SK-N-SH (cell line): ENCODE measurements at regions of chr16 and their contacts with region 1.

Region 1: GRCh38 chr16:117379-118365 is 20.8 kb downstream of the NPRL3 start:
- DNase-seq: peak; percentile 87
- H3K4me3 ChIP-seq: no peak overlapping the region
- H3K27ac ChIP-seq: no peak overlapping the region
- H3K4me1 ChIP-seq: peaks cover 6 to 14% of the 10 kb centered on the region in 2 experiments; a peak in 3 of 4 replicates
- H3K27me3 ChIP-seq: no peaks in the 10 kb centered on the region
- CTCF ChIP-seq: peak; percentile 74
- EP300 ChIP-seq: no peak
- RAD21 ChIP-seq: peak; percentile 62

Region 2: GRCh38 chr16:53346-54236 is 64.1 kb before region 1 on chr16 and contains the starts of genes POLR3K and SNRNP25:
- CTCF ChIA-PET with region 1: no interaction called
- POLR2A ChIA-PET with region 1: no interaction called
- DNase-seq: peak; percentile 100
- H3K4me3 ChIP-seq: peak within 1 kb of the TSS; percentile 67 to 87
- H3K27ac ChIP-seq: peak within 1 kb of the TSS; percentile 70 to 72
- H3K4me1 ChIP-seq: peaks cover 3 to 9% of the 10 kb centered on the region in 2 experiments; a peak in 1 of 4 replicates
- H3K27me3 ChIP-seq: no peaks in the 10 kb centered on the region
- CTCF ChIP-seq: no peak
- EP300 ChIP-seq: no peak
- RAD21 ChIP-seq: no peak
- polyA plus RNA-seq, gene POLR3K: 43.0 and 54.5 TPM in 2 replicates
- polyA plus RNA-seq, gene SNRNP25: 61.9 and 73.4 TPM in 2 replicates

Region 3: DNA sequence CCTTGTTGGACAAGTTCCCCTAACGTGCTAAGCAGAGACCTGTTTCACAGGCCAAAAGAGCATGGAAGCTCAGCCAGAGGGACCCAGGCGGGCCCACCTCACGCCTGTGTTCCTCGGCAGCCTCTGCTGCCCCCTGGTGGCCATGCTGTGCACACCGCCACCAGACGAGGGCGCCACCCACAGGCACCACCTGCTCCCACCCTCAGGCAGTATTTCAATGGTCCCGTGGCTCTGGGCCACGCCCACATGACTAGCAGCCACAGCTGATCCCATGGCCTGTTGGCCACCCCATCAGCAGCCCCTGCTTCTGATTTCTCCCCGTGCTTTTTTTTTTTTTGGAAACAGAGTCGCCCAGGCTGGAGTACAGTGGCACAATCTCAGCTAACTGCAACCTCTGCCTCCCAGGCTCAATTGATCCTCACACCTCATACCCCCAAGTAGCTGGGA is 20.7 kb before region 1 on chr16:
- CTCF ChIA-PET with region 1: interaction called, 28 read pairs
- POLR2A ChIA-PET with region 1: no interaction called
- DNase-seq: peak; percentile 95
- H3K4me3 ChIP-seq: no peak overlapping the region; a peak in 1 of 4 replicates
- H3K27ac ChIP-seq: no peak overlapping the region
- H3K4me1 ChIP-seq: peaks cover 0 to 8% of the 10 kb centered on the region in 2 experiments; a peak in 1 of 4 replicates
- H3K27me3 ChIP-seq: no peaks in the 10 kb centered on the region
- CTCF ChIP-seq: peak; percentile 99
- EP300 ChIP-seq: no peak
- RAD21 ChIP-seq: peak; percentile 83

Region 4: GRCh38 chr16:106623-107324 is 10.9 kb before region 1 on chr16:
- CTCF ChIA-PET with region 1: interaction called, 88 read pairs
- POLR2A ChIA-PET with region 1: no interaction called
- DNase-seq: peak; percentile 79
- H3K4me3 ChIP-seq: no peak overlapping the region; a peak in 1 of 4 replicates
- H3K27ac ChIP-seq: no peak overlapping the region
- H3K4me1 ChIP-seq: no peaks in the 10 kb centered on the region; a peak in 1 of 4 replicates
- H3K27me3 ChIP-seq: no peaks in the 10 kb centered on the region
- CTCF ChIP-seq: peak; percentile 84
- EP300 ChIP-seq: no peak
- RAD21 ChIP-seq: peak; percentile 83

Region 5: GRCh38 chr16:129075-129474 is 11.4 kb after region 1 on chr16:
- CTCF ChIA-PET with region 1: interaction called, 25 read pairs
- POLR2A ChIA-PET with region 1: no interaction called
- DNase-seq: no peak
- H3K4me3 ChIP-seq: no peak overlapping the region
- H3K27ac ChIP-seq: no peak overlapping the region
- H3K4me1 ChIP-seq: no peaks in the 10 kb centered on the region
- H3K27me3 ChIP-seq: no peaks in the 10 kb centered on the region
- CTCF ChIP-seq: no peak
- EP300 ChIP-seq: no peak
- RAD21 ChIP-seq: no peak

Region 6: GRCh38 chr16:138049-138417 is 20.4 kb after region 1 on chr16:
- CTCF ChIA-PET with region 1: interaction called, 25 read pairs
- POLR2A ChIA-PET with region 1: no interaction called
- DNase-seq: peak; percentile 76
- H3K4me3 ChIP-seq: peak overlapping the region; percentile 65 to 95
- H3K27ac ChIP-seq: peak overlapping the region; percentile 30 to 68; a peak in 3 of 4 replicates
- H3K4me1 ChIP-seq: peaks cover 4% of the 10 kb centered on the region in 2 experiments; a peak in 1 of 4 replicates
- H3K27me3 ChIP-seq: no peaks in the 10 kb centered on the region
- CTCF ChIP-seq: no peak
- EP300 ChIP-seq: no peak
- RAD21 ChIP-seq: no peak

Region 7: GRCh38 chr16:589658-590159 is 472.0 kb after region 1 on chr16 and contains the start of gene RAB40C:
- CTCF ChIA-PET with region 1: no interaction called
- POLR2A ChIA-PET with region 1: no interaction called
- DNase-seq: peak; percentile 99
- H3K4me3 ChIP-seq: peak within 1 kb of the TSS; percentile 89 to 90
- H3K27ac ChIP-seq: peak within 1 kb of the TSS; percentile 90 to 97
- H3K4me1 ChIP-seq: peaks cover 21 to 38% of the 10 kb centered on the region in 2 experiments; a peak in 2 of 4 replicates
- H3K27me3 ChIP-seq: no peaks in the 10 kb centered on the region
- CTCF ChIP-seq: no peak
- EP300 ChIP-seq: no peak
- RAD21 ChIP-seq: no peak
- polyA plus RNA-seq, gene RAB40C: 12.1 and 13.0 TPM in 2 replicates